CD8-positive, alpha-beta T cell (primary cell): ENCODE measurements at regions of chr5 and their contacts with region 1.

Region 1: GRCh38 chr5:149561848-149562247 is 10.6 kb upstream of the CSNK1A1 start:
- DNase-seq: no peak
- ATAC-seq: no peak
- H3K4me3 ChIP-seq: no peak overlapping the region
- H3K4me3 Mint-ChIP-seq: no peak overlapping the region
- H3K27ac ChIP-seq: no peak overlapping the region
- H3K27ac Mint-ChIP-seq: no peak overlapping the region
- H3K4me1 ChIP-seq: peaks cover 4% of the 10 kb centered on the region
- H3K4me1 Mint-ChIP-seq: peaks cover 17% of the 10 kb centered on the region
- H3K27me3 ChIP-seq: no peaks in the 10 kb centered on the region
- H3K27me3 Mint-ChIP-seq: no peaks in the 10 kb centered on the region
- CTCF ChIP-seq: no peak

Region 2: GRCh38 chr5:149442563-149443182 is 119.2 kb before region 1 on chr5:
- CTCF ChIA-PET with region 1: interaction called, 69 read pairs
- POLR2A ChIA-PET with region 1: interaction called, 3 read pairs
- intact Hi-C with region 1: loop called in 1 of 2 experiments (anchors 1 kb)
- DNase-seq: peak; percentile 39 to 83 (median 66)
- ATAC-seq: peak; percentile 89
- H3K4me3 ChIP-seq: no peak overlapping the region
- H3K4me3 Mint-ChIP-seq: no peak overlapping the region
- H3K27ac ChIP-seq: no peak overlapping the region
- H3K27ac Mint-ChIP-seq: no peak overlapping the region
- H3K4me1 ChIP-seq: no peaks in the 10 kb centered on the region
- H3K4me1 Mint-ChIP-seq: peaks cover 2% of the 10 kb centered on the region
- H3K27me3 ChIP-seq: no peaks in the 10 kb centered on the region
- H3K27me3 Mint-ChIP-seq: peaks cover 3% of the 10 kb centered on the region
- CTCF ChIP-seq: peak; percentile 80

Region 3: DNA sequence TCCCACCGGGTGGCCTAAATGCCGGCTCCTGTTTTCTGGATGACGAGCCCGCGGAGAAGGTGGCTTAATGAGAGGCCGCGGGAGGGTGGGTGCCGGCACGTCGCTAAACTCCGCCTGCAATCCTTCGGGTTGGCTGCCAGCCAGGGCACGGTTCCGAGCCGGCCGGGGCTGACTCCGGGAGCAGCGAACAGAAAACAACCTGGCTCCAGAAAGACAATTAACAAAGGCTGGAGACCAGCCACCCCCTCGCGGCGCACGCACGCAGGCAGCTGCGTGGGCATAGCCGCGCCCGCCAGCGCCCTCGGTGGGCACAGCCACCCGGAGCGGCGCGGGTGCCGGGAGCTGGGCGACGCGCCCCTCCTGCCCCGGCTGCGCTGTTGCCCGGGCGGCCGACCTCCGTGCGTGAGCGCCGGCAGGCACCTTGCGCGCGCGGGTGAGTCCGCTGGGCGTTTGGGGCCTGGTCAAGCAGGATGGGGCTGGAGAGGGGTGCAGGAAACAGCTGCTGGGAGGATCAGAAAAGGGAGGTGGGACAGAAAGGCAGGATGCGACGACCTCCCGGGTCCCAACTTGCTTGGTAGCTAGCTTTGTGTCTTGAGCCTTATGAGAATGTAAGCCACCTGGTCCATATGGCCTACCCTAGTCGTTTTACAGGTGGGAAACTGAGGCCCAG is 19.5 kb after region 1 on chr5 and contains the start of gene ARHGEF37:
- CTCF ChIA-PET with region 1: interaction called, 19 read pairs
- POLR2A ChIA-PET with region 1: no interaction called
- intact Hi-C with region 1: no loop called
- DNase-seq: peak; percentile 10 to 70 (median 44)
- ATAC-seq: peak; percentile 89
- H3K4me3 ChIP-seq: peak within 1 kb of the TSS; percentile 35 to 49
- H3K4me3 Mint-ChIP-seq: peak within 1 kb of the TSS; percentile 81
- H3K27ac ChIP-seq: no peak within 1 kb of the TSS
- H3K27ac Mint-ChIP-seq: no peak within 1 kb of the TSS
- H3K4me1 ChIP-seq: peaks cover 14% of the 10 kb centered on the region
- H3K4me1 Mint-ChIP-seq: peaks cover 15% of the 10 kb centered on the region
- H3K27me3 ChIP-seq: peaks cover 0 to 3% of the 10 kb centered on the region in 2 experiments
- H3K27me3 Mint-ChIP-seq: peaks cover 9% of the 10 kb centered on the region
- CTCF ChIP-seq: no peak
- total RNA-seq, gene ARHGEF37: not detected

Region 4: GRCh38 chr5:151509231-151509630 is 1947.4 kb after region 1 on chr5:
- CTCF ChIA-PET with region 1: no interaction called
- POLR2A ChIA-PET with region 1: no interaction called
- intact Hi-C with region 1: no loop called
- DNase-seq: no peak
- ATAC-seq: no peak
- H3K4me3 ChIP-seq: no peak overlapping the region
- H3K4me3 Mint-ChIP-seq: no peak overlapping the region
- H3K27ac ChIP-seq: no peak overlapping the region
- H3K27ac Mint-ChIP-seq: no peak overlapping the region
- H3K4me1 ChIP-seq: no peaks in the 10 kb centered on the region
- H3K4me1 Mint-ChIP-seq: no peaks in the 10 kb centered on the region
- H3K27me3 ChIP-seq: no peaks in the 10 kb centered on the region
- H3K27me3 Mint-ChIP-seq: no peaks in the 10 kb centered on the region
- CTCF ChIP-seq: no peak